ENCODE measurements at regions of chr2 and their contacts with region 1.

Region 1: DNA sequence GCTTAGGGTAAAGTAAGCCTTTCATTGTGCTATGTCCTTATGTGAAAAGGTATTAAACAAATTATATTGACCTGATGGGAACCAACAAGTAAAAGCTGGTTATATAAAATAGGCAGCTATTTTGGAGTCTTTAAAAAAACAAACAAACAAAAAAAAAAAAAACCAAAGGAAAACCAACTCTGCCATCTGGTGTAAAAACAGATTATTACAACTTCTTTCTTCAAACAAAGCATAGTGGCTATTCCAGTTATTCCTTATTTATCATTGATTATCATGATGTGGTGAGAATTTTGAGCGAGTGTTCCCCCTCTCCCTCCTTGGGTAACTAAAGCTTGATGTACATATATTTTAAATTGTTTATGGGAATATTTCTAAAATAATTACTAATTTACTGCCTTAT is 122.4 kb upstream of the FHL2 start:
- DNase-seq: no peak
- H3K4me3 ChIP-seq: no peak overlapping the region
- H3K27ac ChIP-seq: no peak overlapping the region
- H3K4me1 ChIP-seq: peaks cover 12% of the 10 kb centered on the region
- H3K27me3 ChIP-seq: no peaks in the 10 kb centered on the region
- CTCF ChIP-seq: peak; percentile 41 to 58 (median 57)
- EP300 ChIP-seq: no peak
- POLR2A ChIP-seq: no peak

Region 2: DNA sequence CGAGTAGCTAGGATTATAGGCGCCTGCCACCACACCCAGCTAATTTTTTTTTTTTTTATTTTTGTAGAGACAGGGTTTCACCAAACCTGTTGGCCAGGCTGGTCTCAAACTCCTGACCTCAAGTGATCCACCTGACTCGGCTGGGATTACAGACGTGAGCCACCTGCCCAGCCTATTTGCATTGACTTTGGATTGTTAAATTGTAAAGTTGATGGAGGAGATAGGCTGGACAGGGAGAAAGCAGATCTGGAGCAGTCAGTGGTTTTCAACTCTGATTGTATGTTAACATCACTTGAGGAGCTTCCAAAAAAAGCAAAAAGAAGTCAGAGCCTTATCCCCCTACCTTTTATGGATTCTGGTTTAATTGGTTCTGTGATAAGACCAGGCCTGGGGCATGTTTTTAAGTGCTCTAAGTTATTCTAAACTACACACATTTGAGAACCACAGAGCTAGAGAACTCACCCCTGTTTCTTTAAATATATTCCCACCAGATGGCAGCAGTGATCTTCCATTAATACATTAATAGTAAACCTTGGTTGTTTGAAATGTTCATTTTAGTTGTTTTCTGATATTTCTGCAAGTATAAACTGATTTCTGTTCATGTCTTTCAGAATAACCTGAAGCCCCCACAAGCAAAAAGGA is 176.4 kb before region 1 on chr2:
- intact Hi-C with region 1: loop called in 1 of 4 experiments (anchors 10 kb)
- DNase-seq: no peak
- H3K4me3 ChIP-seq: no peak overlapping the region
- H3K27ac ChIP-seq: no peak overlapping the region
- H3K4me1 ChIP-seq: no peaks in the 10 kb centered on the region
- H3K27me3 ChIP-seq: no peaks in the 10 kb centered on the region
- CTCF ChIP-seq: peak; percentile 11 to 62 (median 54)
- EP300 ChIP-seq: no peak
- POLR2A ChIP-seq: no peak

Region 3: GRCh38 chr2:105369747-105370690 is 151.2 kb before region 1 on chr2:
- intact Hi-C with region 1: loop called in 3 of 4 experiments (anchors 2 to 5 kb)
- DNase-seq: peak; percentile 80 to 88 (median 87)
- H3K4me3 ChIP-seq: no peak overlapping the region
- H3K27ac ChIP-seq: peak overlapping the region in 1 of 2 donors; percentile 98
- H3K4me1 ChIP-seq: peaks cover 19% of the 10 kb centered on the region
- H3K27me3 ChIP-seq: no peaks in the 10 kb centered on the region
- CTCF ChIP-seq: peak; percentile 79 to 91 (median 89)
- EP300 ChIP-seq: no peak
- POLR2A ChIP-seq: no peak

Region 4: GRCh38 chr2:105438104-105438929 is 82.9 kb before region 1 on chr2:
- intact Hi-C with region 1: loop called in 1 of 4 experiments (anchors 10 kb)
- DNase-seq: peak; percentile 60 to 91 (median 82)
- H3K4me3 ChIP-seq: peak overlapping the region; percentile 27
- H3K27ac ChIP-seq: peak overlapping the region; percentile 26 to 90
- H3K4me1 ChIP-seq: peaks cover 14% of the 10 kb centered on the region
- H3K27me3 ChIP-seq: no peaks in the 10 kb centered on the region
- CTCF ChIP-seq: no peak
- EP300 ChIP-seq: no peak
- POLR2A ChIP-seq: no peak

Region 5: GRCh38 chr2:105454801-105455485 is 66.3 kb before region 1 on chr2:
- intact Hi-C with region 1: loop called in 1 of 4 experiments (anchors 10 kb)
- DNase-seq: peak in 3 of 5 donors; percentile 46 to 60 (median 54)
- H3K4me3 ChIP-seq: no peak overlapping the region
- H3K27ac ChIP-seq: peak overlapping the region in 1 of 2 donors; percentile 24
- H3K4me1 ChIP-seq: peaks cover 12% of the 10 kb centered on the region
- H3K27me3 ChIP-seq: no peaks in the 10 kb centered on the region
- CTCF ChIP-seq: no peak
- EP300 ChIP-seq: no peak
- POLR2A ChIP-seq: no peak

Region 6: DNA sequence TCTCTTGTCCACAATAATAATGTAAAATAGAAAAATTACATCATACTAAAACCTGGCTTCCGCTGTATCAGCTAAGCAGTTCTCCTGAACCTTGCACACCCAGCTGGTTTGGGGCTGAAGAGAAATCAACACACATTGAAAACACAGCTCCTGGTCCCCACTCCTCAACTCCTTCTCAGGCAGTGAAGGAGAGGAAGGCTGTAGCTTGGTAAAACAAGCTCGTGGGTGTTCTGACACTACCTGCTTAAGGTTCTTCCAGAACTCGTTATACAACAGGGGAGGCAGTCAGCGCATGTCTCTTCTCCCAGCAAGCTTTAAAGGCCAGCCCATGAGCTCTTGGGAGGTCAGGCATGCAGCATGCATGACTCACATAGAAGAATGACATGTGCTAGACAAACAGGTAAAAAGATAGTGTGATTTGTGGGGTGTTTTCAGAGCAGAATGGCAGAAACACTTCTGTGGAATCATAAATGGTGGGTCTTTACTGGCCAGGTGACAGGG is 603.8 kb after region 1 on chr2:
- intact Hi-C with region 1: no loop called
- DNase-seq: no peak
- H3K4me3 ChIP-seq: no peak overlapping the region
- H3K27ac ChIP-seq: no peak overlapping the region
- H3K4me1 ChIP-seq: no peaks in the 10 kb centered on the region
- H3K27me3 ChIP-seq: no peaks in the 10 kb centered on the region
- CTCF ChIP-seq: no peak
- EP300 ChIP-seq: no peak
- POLR2A ChIP-seq: no peak